Posterior vena cava (tissue), 2 donors: ENCODE measurements at regions of chr12 and their contacts with region 1.

Region 1: DNA sequence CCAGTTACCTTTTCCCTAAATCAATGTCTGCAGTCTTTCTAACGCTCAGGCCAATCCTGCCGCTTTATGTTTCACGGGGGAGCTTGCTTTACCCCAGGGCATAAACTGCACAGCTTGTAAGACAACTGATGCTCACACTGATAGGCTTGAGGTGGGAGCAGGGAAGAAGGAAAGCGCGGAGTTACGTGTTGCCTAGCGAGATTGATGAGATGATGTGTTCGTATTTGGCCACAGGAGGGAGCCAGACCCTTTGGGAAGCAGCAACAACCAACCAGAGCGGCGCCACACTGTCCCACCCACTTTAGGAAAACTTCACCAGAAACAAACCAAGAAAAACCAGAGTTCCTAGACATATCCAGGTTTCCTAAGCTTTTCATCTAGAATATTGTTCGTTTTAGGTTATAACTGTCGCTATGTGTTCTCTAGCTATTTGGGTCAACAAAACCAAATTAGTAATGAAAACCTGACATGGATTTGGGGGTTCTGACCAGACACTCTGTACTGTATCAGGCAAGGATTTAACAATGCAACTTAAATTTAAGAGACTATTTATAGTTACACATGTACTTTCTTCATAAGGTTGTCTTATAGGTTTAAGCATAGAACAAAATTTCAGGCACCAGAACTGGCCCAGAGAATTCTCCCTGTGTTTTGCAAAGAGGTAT is 2.4 kb downstream of the IL26 start:
- DNase-seq: peak; percentile 92

Region 2: DNA sequence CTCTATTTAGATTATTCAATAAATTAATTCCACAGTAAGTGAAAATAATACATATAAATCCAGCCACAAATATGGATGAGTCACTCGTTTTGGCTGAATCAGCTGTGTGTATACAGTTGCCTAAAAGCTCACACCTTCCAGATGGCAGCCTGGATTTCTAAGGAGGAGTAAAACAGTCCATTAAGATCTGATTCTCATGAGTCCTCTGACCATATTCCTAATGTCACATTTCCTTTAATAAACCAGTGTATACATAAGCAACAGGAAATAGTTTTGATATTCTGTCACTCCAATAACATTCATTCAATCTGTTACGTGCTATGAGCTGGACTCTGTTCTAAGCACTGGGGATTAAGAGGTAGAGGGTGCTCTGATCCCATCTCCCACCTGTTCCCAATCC is 87.2 kb after region 1 on chr12:
- intact Hi-C with region 1: loop called in 1 of 2 experiments (anchors 5 kb)
- DNase-seq: no peak